K562 (cell line): ENCODE measurements at regions of chr2 and their contacts with region 1.

Region 1: GRCh38 chr2:169670215-169670651 is 24.0 kb downstream of the CFAP210 start:
- DNase-seq: peak; percentile 66 to 84 (median 76)
- ATAC-seq: peak; percentile 86
- H3K4me3 ChIP-seq: no peak overlapping the region
- H3K27ac ChIP-seq: peak overlapping the region; percentile 65
- H3K4me1 ChIP-seq: peaks cover 0 to 49% of the 10 kb centered on the region in 2 experiments; a peak in 3 of 5 replicates
- H3K27me3 ChIP-seq: no peaks in the 10 kb centered on the region
- CTCF ChIP-seq: no peak
- EP300 ChIP-seq: peak; percentile 82; the same call in 1 of the 2 replicates
- POLR2A ChIP-seq: no peak
- RAD21 ChIP-seq: no peak

Region 2: DNA sequence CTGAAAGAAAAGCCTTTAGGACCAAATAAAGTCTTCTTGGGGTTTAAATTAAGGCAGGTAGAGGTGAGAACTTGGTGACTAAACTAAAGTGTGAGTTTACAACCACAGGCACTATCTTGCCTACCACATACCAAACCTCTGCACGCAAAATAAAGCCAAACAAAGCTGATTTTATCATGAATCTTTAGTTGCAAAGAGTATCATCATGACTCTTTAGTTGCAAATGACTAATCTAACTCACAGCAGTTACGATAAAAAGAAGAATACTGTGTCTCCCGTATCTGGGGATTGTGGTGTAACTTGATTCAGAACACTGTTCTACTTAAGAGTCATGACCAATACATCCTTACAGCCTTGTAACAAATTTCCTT is 12.8 kb after region 1 on chr2:
- CTCF ChIA-PET with region 1: no interaction called
- POLR2A ChIA-PET with region 1: interaction called, 12 read pairs
- in situ Hi-C with region 1: no loop called
- intact Hi-C with region 1: no loop called
- DNase-seq: no peak
- ATAC-seq: peak; percentile 47
- H3K4me3 ChIP-seq: no peak overlapping the region
- H3K27ac ChIP-seq: no peak overlapping the region
- H3K4me1 ChIP-seq: peaks cover 0 to 6% of the 10 kb centered on the region in 2 experiments; a peak in 1 of 5 replicates
- H3K27me3 ChIP-seq: no peaks in the 10 kb centered on the region
- CTCF ChIP-seq: no peak
- EP300 ChIP-seq: no peak
- POLR2A ChIP-seq: no peak
- RAD21 ChIP-seq: no peak